Testis (tissue), 5 donors: ENCODE measurements at regions of chr22 and their contacts with region 1.

Region 1: GRCh38 chr22:38114484-38115398 is 4.3 kb upstream of the BAIAP2L2 start:
- DNase-seq: peak; percentile 90
- H3K4me3 ChIP-seq: no peak overlapping the region
- H3K27ac ChIP-seq: no peak overlapping the region
- H3K4me1 ChIP-seq: peaks cover 7% of the 10 kb centered on the region
- H3K27me3 ChIP-seq: no peaks in the 10 kb centered on the region
- CTCF ChIP-seq: peak; percentile 67 to 80 (median 79)
- POLR2A ChIP-seq: no peak

Region 2: GRCh38 chr22:38353142-38353629 is 238.4 kb after region 1 on chr22:
- intact Hi-C with region 1: loop called (anchors 5 kb)
- DNase-seq: peak; percentile 65
- H3K4me3 ChIP-seq: no peak overlapping the region
- H3K27ac ChIP-seq: no peak overlapping the region
- H3K4me1 ChIP-seq: no peaks in the 10 kb centered on the region
- H3K27me3 ChIP-seq: no peaks in the 10 kb centered on the region
- CTCF ChIP-seq: peak; percentile 96 to 98 (median 96)
- POLR2A ChIP-seq: no peak